Activated CD4-positive, alpha-beta T cell treated with anti-CD3 and anti-CD28 coated beads, Interleukin-2, amount 10 ng/mL, durations not matched to agents 24 days and 14 days (primary cell): ENCODE measurements at regions of chr19 and their contacts with region 1.

Region 1: DNA sequence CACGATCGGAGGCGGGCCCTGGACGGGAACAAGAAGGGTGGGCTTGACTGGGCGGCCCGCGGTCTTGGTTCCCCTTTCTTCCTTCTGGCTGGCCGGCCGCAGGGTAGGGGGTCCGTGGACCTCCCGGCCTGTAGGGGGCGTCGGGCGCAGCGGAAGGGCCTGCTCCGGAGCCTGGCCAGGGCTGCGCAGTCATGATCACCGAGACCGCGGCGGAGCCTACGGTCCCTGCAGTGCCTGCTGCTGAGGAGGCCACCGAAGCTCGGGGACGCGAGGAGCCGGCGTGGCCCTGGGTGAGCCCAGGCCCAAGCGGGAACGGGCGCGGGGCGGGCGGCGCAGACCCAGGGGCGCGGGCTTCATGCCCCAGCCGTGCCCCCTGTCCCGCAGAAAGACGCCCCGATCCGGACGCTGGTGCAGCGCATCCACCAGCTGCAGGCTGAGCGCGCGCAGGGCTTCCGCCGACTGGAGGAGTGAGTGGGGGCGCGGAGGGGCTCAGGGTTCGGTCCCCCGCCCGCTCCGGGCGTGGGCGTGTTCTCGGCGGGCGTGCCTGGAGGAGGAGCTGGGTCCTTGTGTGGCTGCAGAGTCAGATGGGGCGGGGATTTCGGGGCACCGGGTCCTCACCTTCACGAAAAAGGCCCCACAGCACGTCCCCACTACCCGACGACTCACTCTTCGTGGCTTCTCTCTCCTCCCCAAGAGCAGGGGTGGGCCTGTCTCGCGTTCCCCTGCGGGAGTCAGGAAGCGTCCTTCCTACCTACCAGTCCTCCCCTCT is at the start of gene REX1BD:
- DNase-seq: peak; percentile 97
- H3K4me3 Mint-ChIP-seq: peak within 1 kb of the TSS; percentile 86
- H3K27ac Mint-ChIP-seq: peak within 1 kb of the TSS; percentile 97
- H3K4me1 Mint-ChIP-seq: peaks cover 35% of the 10 kb centered on the region
- H3K27me3 Mint-ChIP-seq: no peaks in the 10 kb centered on the region
- total RNA-seq, gene REX1BD: 130 and 138 TPM in 2 replicates

Region 2: GRCh38 chr19:18543816-18544475 is 44.8 kb before region 1 on chr19:
- intact Hi-C with region 1: loop called (anchors 1 kb)
- DNase-seq: peak; percentile 96
- H3K4me3 Mint-ChIP-seq: peak overlapping the region; percentile 99
- H3K27ac Mint-ChIP-seq: peak overlapping the region; percentile 99
- H3K4me1 Mint-ChIP-seq: peaks cover 22% of the 10 kb centered on the region
- H3K27me3 Mint-ChIP-seq: no peaks in the 10 kb centered on the region

Region 3: DNA sequence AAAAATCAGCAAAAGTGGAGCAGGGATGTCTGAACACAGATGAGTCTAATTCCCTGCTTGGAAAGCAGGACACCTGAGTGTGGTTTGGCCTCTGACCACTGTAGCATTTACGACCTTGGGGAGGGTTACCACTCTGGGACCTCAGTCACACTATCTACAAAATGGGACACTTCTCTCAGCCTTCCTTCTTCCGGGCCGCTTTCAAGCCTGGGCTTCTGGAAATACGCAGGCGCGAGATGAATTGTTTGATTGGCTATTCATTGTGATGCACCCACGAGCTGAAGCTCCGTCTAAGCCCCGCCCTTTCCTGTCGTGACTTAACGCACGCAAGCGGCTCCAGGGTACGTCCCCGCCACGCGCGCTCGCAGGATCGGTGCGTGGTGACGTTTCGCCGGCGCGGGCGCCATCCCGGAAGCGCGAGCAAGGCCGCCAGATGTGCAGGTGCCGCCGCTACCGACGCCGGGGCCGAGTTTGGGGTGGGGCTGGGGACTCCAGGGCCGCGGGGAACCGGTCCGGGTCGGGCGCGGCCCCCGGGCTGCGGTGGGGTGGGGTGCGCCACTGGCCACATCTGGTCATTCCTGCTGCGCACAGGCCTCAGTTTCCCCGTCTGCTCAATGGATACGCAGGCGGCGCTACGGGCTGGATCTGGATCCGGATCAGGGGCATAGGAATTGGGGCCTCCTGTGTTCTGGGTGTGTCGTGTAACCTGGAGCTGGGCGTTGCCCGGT is 31.2 kb before region 1 on chr19 and contains the start of gene KXD1:
- intact Hi-C with region 1: loop called (anchors 1 kb)
- DNase-seq: peak; percentile 99
- H3K4me3 Mint-ChIP-seq: peak within 1 kb of the TSS; percentile 97
- H3K27ac Mint-ChIP-seq: peak within 1 kb of the TSS; percentile 93
- H3K4me1 Mint-ChIP-seq: peaks cover 18% of the 10 kb centered on the region
- H3K27me3 Mint-ChIP-seq: no peaks in the 10 kb centered on the region
- total RNA-seq, gene KXD1: 124 and 134 TPM in 2 replicates

Region 4: DNA sequence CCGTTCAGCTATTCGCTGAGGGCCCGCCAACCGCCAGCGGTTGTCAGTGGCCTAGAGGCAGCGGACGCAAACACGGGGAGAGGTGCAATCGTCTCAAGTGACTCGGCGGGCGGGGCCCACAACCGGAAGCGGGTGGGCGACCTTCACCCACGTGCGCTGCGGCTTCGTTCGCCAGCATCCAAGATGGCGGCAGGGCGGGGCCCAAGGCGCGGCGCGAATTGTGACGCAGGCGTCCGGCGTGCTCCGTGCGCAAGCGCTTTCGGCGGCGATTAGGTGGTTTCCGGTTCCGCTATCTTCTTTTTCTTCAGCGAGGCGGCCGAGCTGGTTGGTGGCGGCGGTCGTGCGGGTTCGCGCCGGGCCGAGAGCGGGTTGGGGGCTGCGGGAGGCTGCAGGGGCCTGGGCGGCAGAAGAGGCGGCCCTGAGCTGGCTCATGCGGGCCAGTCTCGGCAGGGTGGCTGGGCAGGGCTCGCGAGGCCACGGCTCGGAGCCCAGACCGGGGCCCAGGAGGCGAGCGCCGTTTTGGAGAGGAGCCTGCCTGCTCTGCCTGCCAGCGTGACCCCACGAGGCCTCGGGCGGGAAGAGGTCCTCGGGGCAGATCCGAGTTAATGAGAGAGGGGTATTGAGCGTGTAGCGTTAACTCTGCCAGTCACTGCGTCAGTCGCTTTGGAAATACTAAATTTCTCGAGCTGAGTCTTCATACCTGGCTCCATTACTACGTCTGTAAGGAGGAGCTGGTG is 17.1 kb before region 1 on chr19 and contains the start of gene UBA52:
- intact Hi-C with region 1: loop called (anchors 1 kb)
- DNase-seq: peak; percentile 100
- H3K4me3 Mint-ChIP-seq: peak within 1 kb of the TSS; percentile 99
- H3K27ac Mint-ChIP-seq: peak within 1 kb of the TSS; percentile 95
- H3K4me1 Mint-ChIP-seq: peaks cover 24% of the 10 kb centered on the region
- H3K27me3 Mint-ChIP-seq: no peaks in the 10 kb centered on the region
- total RNA-seq, gene UBA52: 1,581 and 1,604 TPM in 2 replicates

Region 5: GRCh38 chr19:18683213-18683939 is 94.6 kb after region 1 on chr19 and contains the start of gene CRTC1:
- intact Hi-C with region 1: loop called (anchors 5 kb)
- DNase-seq: peak; percentile 98
- H3K4me3 Mint-ChIP-seq: peak within 1 kb of the TSS; percentile 88
- H3K27ac Mint-ChIP-seq: peak within 1 kb of the TSS; percentile 91
- H3K4me1 Mint-ChIP-seq: peaks cover 13% of the 10 kb centered on the region
- H3K27me3 Mint-ChIP-seq: no peaks in the 10 kb centered on the region
- total RNA-seq, gene CRTC1: 7.1 and 7.2 TPM in 2 replicates

Region 6: GRCh38 chr19:18846862-18847548 is 258.2 kb after region 1 on chr19:
- intact Hi-C with region 1: loop called (anchors 5 kb)
- DNase-seq: peak; percentile 89
- H3K4me3 Mint-ChIP-seq: no peak overlapping the region
- H3K27ac Mint-ChIP-seq: peak overlapping the region; percentile 69
- H3K4me1 Mint-ChIP-seq: peaks cover 48% of the 10 kb centered on the region
- H3K27me3 Mint-ChIP-seq: no peaks in the 10 kb centered on the region